ENCODE measurements at regions of chr3 and their contacts with region 1.

Region 1: DNA sequence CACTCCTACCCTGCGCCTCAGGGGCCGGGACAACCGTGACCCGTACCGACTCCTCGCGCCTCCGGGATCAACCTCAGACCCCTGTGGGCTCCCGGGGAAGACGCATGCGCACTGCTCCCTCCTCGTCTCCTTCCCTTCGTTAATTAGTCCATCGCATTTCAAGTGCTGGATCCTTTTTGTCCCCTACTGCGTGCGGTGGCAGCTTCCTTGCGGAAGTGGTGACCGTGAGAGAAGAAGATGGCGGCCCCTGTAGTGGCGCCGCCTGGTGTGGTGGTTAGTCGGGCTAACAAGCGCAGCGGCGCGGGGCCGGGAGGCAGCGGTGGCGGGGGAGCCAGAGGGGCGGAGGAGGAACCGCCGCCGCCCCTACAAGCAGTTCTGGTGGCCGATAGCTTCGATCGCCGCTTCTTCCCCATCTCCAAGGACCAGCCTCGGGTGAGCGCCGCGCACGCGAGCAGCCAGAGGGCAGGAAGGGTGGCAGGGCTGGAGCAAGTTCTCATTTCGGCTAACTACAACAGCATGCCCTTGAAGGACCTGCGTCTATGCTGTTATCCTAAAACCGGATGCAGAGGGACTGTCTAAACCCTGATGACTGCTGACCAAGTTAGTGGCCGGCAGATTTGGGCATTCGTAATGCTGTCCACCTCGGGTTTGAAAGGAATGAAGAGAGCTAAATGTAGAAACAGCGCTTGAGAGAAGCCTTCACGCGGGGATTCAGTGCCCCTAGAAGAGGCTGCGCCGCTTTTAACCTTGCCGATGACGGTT is at the start of gene EIF2B5:
- DNase-seq: peak; percentile 94
- H3K4me3 Mint-ChIP-seq: peak within 1 kb of the TSS; percentile 97
- H3K27ac Mint-ChIP-seq: peak within 1 kb of the TSS; percentile 97
- H3K4me1 Mint-ChIP-seq: peaks cover 29% of the 10 kb centered on the region
- H3K27me3 Mint-ChIP-seq: no peaks in the 10 kb centered on the region
- total RNA-seq, gene EIF2B5: 48.8 to 56.4 TPM

Region 2: GRCh38 chr3:183895296-183895695 is 240.0 kb before region 1 on chr3:
- CTCF ChIA-PET with region 1: interaction called, 4 read pairs
- intact Hi-C with region 1: loop called (anchors 1 kb)
- DNase-seq: peak; percentile 41
- H3K4me3 Mint-ChIP-seq: no peak overlapping the region
- H3K27ac Mint-ChIP-seq: no peak overlapping the region
- H3K4me1 Mint-ChIP-seq: peaks cover 3% of the 10 kb centered on the region
- H3K27me3 Mint-ChIP-seq: no peaks in the 10 kb centered on the region

Region 3: GRCh38 chr3:183944775-183945174 is 190.6 kb before region 1 on chr3:
- CTCF ChIA-PET with region 1: no interaction called
- intact Hi-C with region 1: no loop called
- DNase-seq: no peak
- H3K4me3 Mint-ChIP-seq: no peak overlapping the region
- H3K27ac Mint-ChIP-seq: no peak overlapping the region
- H3K4me1 Mint-ChIP-seq: no peaks in the 10 kb centered on the region
- H3K27me3 Mint-ChIP-seq: no peaks in the 10 kb centered on the region

Region 4: DNA sequence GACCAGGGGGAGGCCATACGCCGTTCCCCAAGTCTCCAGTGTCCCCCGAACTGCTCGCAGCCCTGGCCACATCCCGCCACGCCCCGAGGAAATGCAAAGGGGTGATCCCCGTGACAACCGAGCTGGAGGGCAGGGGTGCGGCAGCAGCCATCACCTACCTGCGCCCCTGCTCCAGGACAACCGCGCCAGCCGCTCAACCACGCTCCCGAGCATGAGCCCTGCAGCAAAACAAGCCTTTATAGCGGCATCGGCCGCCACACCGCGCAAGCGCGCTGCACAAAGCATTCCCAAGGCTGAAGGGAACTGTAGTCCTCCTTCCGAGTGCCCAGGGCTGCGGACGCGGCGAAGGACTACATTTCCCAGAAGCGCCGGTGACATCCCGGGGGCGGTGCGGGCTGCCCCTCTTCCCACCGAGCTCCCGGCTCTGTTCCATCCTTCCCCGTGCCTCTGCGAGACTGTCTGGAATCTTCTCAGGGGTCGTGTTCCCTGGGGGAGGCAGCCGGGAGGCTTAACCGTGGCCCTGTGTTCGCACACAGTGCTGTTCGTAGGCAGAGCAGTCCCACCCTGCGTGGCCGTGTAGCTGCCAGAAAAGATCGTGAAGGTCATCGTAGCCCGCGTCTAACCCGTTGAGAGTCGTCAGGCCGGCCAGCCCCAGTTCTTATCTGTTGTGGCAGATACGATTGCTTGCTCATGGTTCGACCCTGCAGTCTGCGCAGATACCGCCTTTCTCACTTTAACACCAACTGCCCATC is 117.5 kb before region 1 on chr3 and contains the start of gene ABCC5:
- CTCF ChIA-PET with region 1: no interaction called
- intact Hi-C with region 1: loop called (anchors 1 kb)
- DNase-seq: peak; percentile 88
- H3K4me3 Mint-ChIP-seq: peak within 1 kb of the TSS; percentile 98
- H3K27ac Mint-ChIP-seq: peak within 1 kb of the TSS; percentile 77
- H3K4me1 Mint-ChIP-seq: peaks cover 16% of the 10 kb centered on the region
- H3K27me3 Mint-ChIP-seq: no peaks in the 10 kb centered on the region
- total RNA-seq, gene ABCC5: 11.2 to 12.0 TPM

Region 5: DNA sequence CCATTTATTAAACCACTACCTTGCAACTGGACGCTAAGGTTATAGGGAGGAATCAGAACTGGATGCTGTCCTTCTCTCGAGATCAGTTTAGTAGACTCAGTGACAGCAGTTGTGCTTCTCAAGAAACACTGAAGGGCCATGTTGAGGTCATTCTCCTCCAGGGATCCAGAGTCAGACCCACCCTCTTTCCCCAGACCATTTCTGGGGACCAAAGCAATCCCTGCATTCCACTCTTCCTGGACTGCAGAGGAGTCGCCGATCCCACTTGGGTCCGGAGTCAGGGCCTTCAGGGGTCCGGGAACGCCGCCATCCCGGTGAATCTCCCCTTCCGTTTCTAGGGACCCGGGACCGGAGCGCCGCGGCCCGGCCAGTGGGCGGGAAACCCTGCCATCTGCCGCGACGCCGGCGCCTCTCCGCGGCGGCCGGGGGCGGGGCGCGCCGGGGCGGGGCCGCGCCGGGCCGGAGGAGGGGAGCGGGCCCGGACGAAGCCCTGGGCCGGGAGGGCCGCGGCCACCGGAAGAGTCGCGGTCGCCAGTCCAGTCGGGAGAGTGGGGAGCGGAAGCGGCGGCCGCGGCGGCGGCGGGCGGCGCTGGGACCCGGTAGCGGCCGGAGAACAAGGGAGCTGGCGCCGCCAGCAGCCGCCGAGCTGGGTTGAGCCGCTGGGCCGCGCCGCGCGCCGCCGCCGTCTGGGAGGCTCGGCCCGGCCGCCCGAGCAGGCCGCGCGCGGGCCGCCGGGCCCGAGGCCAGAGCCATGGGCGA is 19.7 kb after region 1 on chr3 and contains the start of gene DVL3:
- CTCF ChIA-PET with region 1: interaction called, 3 read pairs
- intact Hi-C with region 1: loop called (anchors 1 kb)
- DNase-seq: peak; percentile 25
- H3K4me3 Mint-ChIP-seq: peak within 1 kb of the TSS; percentile 94
- H3K27ac Mint-ChIP-seq: peak within 1 kb of the TSS; percentile 66
- H3K4me1 Mint-ChIP-seq: peaks cover 19% of the 10 kb centered on the region
- H3K27me3 Mint-ChIP-seq: no peaks in the 10 kb centered on the region
- total RNA-seq, gene DVL3: 19.6 to 19.9 TPM

Region 6: DNA sequence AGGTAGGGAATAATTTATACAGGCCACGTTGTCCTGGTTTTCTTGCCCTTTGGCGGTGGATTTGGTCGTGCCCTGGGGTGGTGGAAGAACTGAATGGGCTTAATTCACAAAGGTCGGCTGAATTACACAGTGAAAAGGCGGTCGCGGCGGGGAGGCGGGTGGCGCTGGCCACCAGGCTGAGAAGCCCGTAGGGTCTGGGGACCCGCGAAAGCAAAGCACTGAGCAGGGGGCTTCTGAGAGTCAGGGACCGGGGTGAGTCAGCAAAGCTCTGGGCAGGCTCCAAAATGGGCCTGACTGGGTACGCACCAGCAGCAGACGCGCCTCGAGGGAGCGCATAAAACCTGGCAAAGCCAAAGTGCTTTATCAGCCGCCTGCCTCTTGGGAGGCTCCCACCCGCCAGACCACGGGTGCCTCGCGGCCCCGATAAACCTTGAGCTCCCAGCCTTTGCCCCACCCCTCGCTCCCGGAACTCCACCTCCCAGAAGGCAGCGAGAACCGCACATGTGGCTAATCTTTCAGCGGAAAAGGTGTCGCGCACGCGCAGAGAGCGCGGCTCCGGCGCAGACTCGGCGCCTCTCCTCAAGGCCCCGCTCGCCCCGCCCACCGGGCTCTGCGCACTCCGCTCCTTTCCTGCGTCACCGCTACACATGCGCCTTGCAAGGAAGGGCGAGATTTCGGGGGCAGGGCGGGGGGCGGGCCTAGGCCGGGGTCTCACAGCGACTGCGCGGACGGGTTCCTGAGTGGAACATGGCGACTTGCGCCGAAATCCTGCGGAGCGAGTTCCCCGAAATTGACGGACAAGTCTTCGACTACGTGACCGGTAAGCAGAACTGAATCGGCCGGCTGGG is 50.4 kb after region 1 on chr3 and contains the start of gene ABCF3:
- CTCF ChIA-PET with region 1: interaction called, 3 read pairs
- intact Hi-C with region 1: loop called (anchors 1 kb)
- DNase-seq: peak; percentile 99
- H3K4me3 Mint-ChIP-seq: peak within 1 kb of the TSS; percentile 94
- H3K27ac Mint-ChIP-seq: peak within 1 kb of the TSS; percentile 92
- H3K4me1 Mint-ChIP-seq: peaks cover 28% of the 10 kb centered on the region
- H3K27me3 Mint-ChIP-seq: no peaks in the 10 kb centered on the region
- total RNA-seq, gene ABCF3: 38.5 to 39.1 TPM

Region 7: DNA sequence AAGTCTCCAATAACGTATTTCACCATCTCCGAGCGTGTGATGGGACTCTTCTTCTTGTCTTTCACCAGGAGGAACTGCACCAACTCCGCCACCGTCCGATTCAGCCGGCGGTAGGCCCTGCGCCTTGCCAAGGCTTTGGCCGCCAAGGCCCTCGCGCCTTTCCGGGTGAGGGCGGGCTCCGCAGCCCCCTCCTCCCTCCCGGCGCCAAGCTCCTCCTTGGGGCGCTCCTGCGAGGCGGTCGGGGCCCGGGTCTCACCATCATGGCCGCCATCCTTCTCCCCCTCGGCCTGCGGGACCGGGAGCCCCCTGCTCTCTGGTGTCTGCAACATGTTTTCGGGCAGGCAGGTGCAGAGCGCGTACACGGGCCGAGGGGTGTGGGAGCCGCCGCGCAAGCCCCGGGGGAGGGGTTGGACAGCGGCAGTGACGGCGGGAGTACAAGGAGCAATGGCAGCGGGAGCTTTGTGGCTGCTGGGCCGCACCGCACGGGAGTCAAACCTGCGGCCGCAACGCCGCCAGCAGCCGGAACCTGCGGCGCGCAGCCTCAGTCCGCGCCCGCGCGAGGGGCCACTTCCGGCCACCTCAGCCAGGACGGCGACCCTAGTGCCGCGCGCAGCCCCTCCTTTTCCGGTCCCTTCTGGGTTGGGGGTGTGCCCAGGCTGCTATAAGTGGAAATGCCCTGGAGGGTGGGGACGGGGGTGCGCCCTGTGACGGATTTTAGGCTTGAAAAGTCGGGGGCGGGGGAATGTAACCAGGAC is 576.3 kb after region 1 on chr3 and contains the start of gene MAGEF1:
- CTCF ChIA-PET with region 1: no interaction called
- intact Hi-C with region 1: loop called (anchors 10 kb)
- DNase-seq: peak; percentile 81
- H3K4me3 Mint-ChIP-seq: peak within 1 kb of the TSS; percentile 95
- H3K27ac Mint-ChIP-seq: peak within 1 kb of the TSS; percentile 90
- H3K4me1 Mint-ChIP-seq: peaks cover 36% of the 10 kb centered on the region
- H3K27me3 Mint-ChIP-seq: no peaks in the 10 kb centered on the region
- total RNA-seq, gene MAGEF1: 17.4 to 18.1 TPM

Measured in activated naive CD4-positive, alpha-beta T cell treated with anti-CD3 and anti-CD28 coated beads for 36 hours (primary cell).